WTC11 (cell line): ENCODE measurements at regions of chr5 and their contacts with region 1.

Region 1: GRCh38 chr5:141338538-141339306 is at the start of gene PCDHGA2:
- DNase-seq: peak; percentile 60
- ATAC-seq: peak; percentile 78
- H3K4me3 Mint-ChIP-seq: peak within 1 kb of the TSS; percentile 30; the same call in 1 of the 2 replicates
- H3K27ac Mint-ChIP-seq: no peak within 1 kb of the TSS
- H3K4me1 Mint-ChIP-seq: peaks cover 1% of the 10 kb centered on the region; the same call in 1 of the 2 replicates
- H3K27me3 Mint-ChIP-seq: no peaks in the 10 kb centered on the region; the same call in 1 of the 2 replicates
- CTCF ChIP-seq: peak; percentile 30; the same call in 1 of the 2 replicates
- total RNA-seq, gene PCDHGA2: 0.66 to 0.96 TPM (median 0.94 TPM) in 3 replicates

Region 2: GRCh38 chr5:139903795-139904565 is 1434.7 kb before region 1 on chr5:
- CTCF ChIA-PET with region 1: no interaction called
- POLR2A ChIA-PET with region 1: no interaction called
- DNase-seq: peak; percentile 67
- ATAC-seq: peak; percentile 50
- H3K4me3 Mint-ChIP-seq: peak overlapping the region; percentile 71
- H3K27ac Mint-ChIP-seq: no peak overlapping the region
- H3K4me1 Mint-ChIP-seq: peaks cover 12% of the 10 kb centered on the region
- H3K27me3 Mint-ChIP-seq: peaks cover 49% of the 10 kb centered on the region
- CTCF ChIP-seq: no peak

Region 3: GRCh38 chr5:141320225-141321169 is 18.2 kb before region 1 on chr5 and contains the start of gene TAF7:
- CTCF ChIA-PET with region 1: interaction called, 12 read pairs
- POLR2A ChIA-PET with region 1: interaction called, 8 read pairs
- DNase-seq: peak; percentile 95
- ATAC-seq: peak; percentile 94
- H3K4me3 Mint-ChIP-seq: peak within 1 kb of the TSS; percentile 99
- H3K27ac Mint-ChIP-seq: peak within 1 kb of the TSS; percentile 99
- H3K4me1 Mint-ChIP-seq: peaks cover 24% of the 10 kb centered on the region
- H3K27me3 Mint-ChIP-seq: peaks cover 24% of the 10 kb centered on the region
- CTCF ChIP-seq: peak; percentile 85
- total RNA-seq, gene TAF7: 87.8 to 96.2 TPM (median 90.1 TPM) in 3 replicates

Region 4: DNA sequence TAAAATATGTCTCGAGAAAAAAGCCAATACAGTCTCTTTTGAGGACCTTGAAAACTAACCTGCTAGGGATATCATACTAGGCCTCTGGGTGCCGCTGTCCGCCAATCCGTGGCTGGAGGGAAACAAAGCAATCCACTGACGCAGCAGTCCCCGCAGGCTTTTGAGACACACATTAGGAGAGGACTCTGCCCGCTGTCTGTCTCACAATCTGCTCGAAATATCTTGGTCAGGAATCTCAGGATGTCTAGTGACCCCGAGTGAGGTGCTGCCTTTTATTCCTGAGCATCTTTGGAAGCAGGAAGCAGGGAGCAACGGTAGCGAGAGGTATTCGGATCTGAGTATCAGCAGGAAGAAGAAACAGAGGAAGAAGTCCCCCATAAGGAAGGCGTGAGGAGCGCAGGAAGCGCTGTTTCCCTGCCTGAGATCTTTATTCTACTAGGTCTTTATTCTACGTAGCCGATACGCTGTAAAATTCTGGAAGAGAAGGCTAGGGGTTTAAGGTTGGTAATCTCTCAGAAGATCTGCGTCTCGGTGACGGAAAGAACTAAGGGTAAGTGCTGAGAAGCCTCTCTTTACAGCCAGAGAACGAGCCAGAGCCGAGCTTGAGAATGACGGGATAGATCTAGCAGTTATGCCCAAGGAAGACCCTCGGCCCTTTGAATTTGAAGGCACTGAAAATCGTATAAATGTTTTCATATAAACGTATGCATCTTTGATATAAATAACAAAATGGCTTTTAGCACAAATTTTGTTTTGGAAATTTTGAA is 12.5 kb before region 1 on chr5:
- CTCF ChIA-PET with region 1: interaction called, 33 read pairs
- POLR2A ChIA-PET with region 1: no interaction called
- DNase-seq: peak; percentile 76
- ATAC-seq: peak; percentile 91
- H3K4me3 Mint-ChIP-seq: peak overlapping the region; percentile 90
- H3K27ac Mint-ChIP-seq: peak overlapping the region; percentile 98
- H3K4me1 Mint-ChIP-seq: peaks cover 7% of the 10 kb centered on the region
- H3K27me3 Mint-ChIP-seq: peaks cover 12% of the 10 kb centered on the region
- CTCF ChIP-seq: peak; percentile 43; the same call in 1 of the 2 replicates

Region 5: DNA sequence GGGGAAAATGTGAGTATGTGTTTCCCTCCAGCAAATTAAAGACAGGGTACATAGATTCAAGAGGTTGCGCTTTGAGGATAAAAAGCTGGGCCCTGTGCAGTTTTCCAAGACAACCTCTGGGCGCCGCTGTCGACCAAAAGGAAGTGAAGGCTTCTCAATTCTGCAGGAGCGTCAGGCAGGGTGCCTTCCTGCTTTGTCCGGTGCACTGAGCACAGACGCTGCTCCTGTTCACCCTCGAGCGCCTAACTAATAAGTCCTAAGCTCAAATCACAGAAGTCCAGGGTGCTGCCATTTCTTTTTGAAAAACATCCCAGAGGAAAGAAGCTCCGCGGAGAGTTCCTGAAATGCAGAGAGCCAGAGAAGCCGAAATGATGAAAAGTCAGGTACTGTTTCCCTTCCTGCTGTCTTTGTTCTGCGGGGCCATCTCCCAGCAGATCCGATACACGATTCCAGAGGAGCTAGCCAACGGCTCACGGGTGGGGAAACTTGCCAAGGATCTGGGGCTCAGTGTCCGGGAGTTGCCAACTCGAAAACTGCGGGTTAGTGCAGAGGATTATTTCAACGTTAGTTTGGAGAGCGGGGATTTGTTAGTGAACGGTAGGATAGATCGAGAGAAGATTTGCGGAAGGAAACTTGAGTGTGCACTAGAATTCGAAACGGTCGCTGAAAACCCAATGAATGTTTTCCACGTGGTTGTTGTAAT is 11.3 kb after region 1 on chr5 and contains the start of gene PCDHGB1:
- CTCF ChIA-PET with region 1: interaction called, 22 read pairs
- POLR2A ChIA-PET with region 1: no interaction called
- DNase-seq: peak; percentile 86
- ATAC-seq: peak; percentile 96
- H3K4me3 Mint-ChIP-seq: peak within 1 kb of the TSS; percentile 72
- H3K27ac Mint-ChIP-seq: peak within 1 kb of the TSS; percentile 47; the same call in 1 of the 2 replicates
- H3K4me1 Mint-ChIP-seq: peaks cover 2% of the 10 kb centered on the region
- H3K27me3 Mint-ChIP-seq: peaks cover 3% of the 10 kb centered on the region
- CTCF ChIP-seq: peak; percentile 50
- total RNA-seq, gene PCDHGB1: 4.9 to 5.6 TPM (median 5.5 TPM) in 3 replicates

Region 6: DNA sequence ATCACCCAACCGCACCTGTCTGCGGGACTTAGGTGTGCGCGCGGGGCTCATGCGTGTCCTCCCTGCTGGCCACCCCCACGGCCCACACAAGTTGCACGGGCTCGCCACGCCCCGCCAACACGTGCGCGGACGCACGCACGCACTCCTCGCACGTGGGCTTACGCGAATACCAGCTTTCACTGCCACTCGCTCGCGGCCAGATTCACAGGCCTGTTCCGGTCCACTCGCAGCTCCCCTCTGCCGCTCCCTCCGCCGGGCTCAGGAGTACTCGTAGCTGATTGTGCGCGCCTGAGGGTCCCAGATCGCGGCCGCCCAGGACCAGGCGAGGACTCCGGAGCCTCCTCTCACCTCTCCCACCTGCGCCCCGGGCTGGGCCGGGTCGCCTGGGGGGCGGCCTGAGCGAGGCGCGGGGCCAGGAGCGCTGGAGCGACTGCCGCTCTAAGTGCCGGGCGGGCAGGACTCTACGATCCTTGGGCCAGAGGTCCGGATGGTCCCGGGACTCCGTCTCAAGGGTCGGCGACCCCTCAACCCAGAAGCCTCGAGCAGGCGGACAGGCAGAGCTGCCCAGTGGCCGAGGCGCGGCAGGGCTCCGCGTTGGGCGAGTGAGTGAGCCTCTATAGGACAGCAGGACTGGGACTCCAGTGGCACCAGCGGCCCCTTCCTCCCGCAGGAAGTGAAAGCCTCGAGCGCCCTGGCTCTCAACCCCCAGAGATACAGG is 153.6 kb after region 1 on chr5:
- CTCF ChIA-PET with region 1: no interaction called
- POLR2A ChIA-PET with region 1: no interaction called
- DNase-seq: peak; percentile 49
- ATAC-seq: peak; percentile 10
- H3K4me3 Mint-ChIP-seq: peak overlapping the region; percentile 66
- H3K27ac Mint-ChIP-seq: no peak overlapping the region
- H3K4me1 Mint-ChIP-seq: peaks cover 57% of the 10 kb centered on the region
- H3K27me3 Mint-ChIP-seq: peaks cover 52% of the 10 kb centered on the region
- CTCF ChIP-seq: no peak